Left ventricle myocardium inferior (tissue), 1 donor: ENCODE measurements at regions of chr3 and their contacts with region 1.

Region 1: DNA sequence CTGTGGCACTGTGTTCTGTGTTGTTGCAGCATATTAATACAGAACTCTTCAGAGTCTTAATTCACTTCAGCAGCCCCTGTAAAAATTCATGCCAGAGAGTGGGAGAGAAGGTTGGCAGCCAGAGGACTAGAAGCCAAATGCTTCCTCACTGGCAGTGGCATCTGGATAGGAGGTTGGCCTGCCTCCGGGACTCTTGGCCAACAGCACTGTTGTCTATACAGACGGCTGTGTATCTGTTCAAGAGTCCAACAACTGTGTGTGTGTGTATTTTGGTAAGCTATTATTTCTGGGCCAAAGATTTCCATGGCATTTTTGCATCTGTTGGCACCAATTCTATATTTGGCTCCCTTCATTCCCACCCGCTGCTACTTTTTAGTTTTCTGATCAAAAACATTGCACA is 156.0 kb upstream of the SOX2 start:
- DNase-seq: peak; percentile 41
- H3K4me3 ChIP-seq: no peak overlapping the region
- H3K27ac ChIP-seq: no peak overlapping the region
- H3K4me1 ChIP-seq: peaks cover 13% of the 10 kb centered on the region
- H3K27me3 ChIP-seq: no peaks in the 10 kb centered on the region
- CTCF ChIP-seq: no peak

Region 2: DNA sequence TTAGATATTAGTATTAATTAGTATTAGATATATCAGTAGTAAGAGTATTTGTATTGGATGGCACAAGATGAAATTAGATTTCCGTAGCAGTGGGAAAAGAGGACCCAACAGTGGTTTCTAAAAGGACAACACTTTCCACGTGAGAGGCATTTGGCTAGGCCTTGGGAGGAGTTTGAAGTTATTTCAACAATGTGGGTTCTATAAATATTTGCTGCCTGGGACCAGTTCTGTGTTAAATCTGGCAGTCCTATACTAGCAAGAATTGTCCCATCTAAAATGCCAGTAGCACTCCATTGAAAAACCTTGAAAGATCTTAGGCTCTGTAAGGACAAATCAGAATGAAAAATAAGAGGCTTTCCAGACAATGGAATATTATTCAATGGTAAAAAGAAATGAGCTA is 219.1 kb before region 1 on chr3:
- intact Hi-C with region 1: loop called (anchors 5 kb)
- DNase-seq: no peak
- H3K4me3 ChIP-seq: no peak overlapping the region
- H3K27ac ChIP-seq: no peak overlapping the region
- H3K4me1 ChIP-seq: peaks cover 5% of the 10 kb centered on the region
- H3K27me3 ChIP-seq: no peaks in the 10 kb centered on the region
- CTCF ChIP-seq: no peak

Region 3: DNA sequence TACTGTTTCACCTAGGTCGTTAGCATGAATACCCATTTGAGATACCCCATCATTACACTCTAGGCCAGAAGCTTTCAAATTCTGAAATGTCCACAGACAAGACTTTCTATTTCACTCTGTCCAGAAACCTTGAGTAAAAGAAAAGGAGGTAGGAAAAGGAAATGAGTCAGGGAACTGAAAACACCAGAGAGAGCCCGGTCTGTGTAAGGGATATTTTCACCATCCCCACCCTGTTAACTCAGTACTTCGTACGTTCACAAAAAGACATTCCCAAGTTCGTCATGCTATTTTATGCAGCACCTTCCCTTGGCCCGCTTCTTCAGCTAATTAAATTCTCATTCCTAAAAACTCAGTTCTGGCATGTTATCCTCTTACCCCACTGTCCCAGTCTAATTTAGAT is 66.7 kb after region 1 on chr3:
- intact Hi-C with region 1: no loop called
- DNase-seq: no peak
- H3K4me3 ChIP-seq: no peak overlapping the region
- H3K27ac ChIP-seq: no peak overlapping the region
- H3K4me1 ChIP-seq: no peaks in the 10 kb centered on the region
- H3K27me3 ChIP-seq: no peaks in the 10 kb centered on the region
- CTCF ChIP-seq: no peak

Region 4: GRCh38 chr3:181761901-181762300 is 206.2 kb after region 1 on chr3:
- intact Hi-C with region 1: no loop called
- DNase-seq: no peak
- H3K4me3 ChIP-seq: no peak overlapping the region
- H3K27ac ChIP-seq: no peak overlapping the region
- H3K4me1 ChIP-seq: no peaks in the 10 kb centered on the region
- H3K27me3 ChIP-seq: peaks cover 29% of the 10 kb centered on the region
- CTCF ChIP-seq: no peak